ENCODE measurements at regions of chr2 and their contacts with region 1.

Region 1: DNA sequence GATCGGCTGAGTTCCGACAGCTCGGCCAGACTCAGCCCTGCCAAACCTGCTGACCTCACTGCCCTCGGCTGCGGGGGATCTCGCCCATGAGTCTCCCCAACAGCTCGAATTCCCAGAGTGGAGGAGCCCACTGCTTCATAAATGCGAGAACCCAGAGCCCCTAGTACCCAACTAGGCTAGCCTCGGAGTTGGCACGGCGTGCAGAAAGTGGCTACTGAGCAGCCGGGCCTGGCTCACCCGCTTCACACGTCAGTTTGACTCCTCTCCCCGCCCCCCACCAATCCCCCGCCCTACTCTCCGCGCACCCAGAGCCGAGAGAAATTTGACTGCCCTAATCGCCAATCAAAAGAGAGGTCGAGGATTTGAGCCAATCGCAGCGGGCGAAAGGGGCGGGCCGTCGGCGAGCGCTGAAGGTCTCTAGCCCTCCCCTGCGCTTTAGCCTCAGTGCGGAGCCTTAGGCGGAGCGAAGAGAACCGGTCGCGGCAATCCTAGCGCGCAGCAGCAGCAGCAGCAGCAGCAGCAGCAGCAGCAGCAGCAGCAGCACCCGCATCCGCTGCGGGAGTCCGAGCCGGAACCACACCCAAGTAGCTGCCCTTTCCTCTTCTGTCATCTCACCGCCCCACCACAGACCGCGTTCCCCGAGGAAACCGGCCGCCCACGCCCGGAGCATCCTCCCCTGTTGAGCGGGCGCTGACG is at the start of gene GLS:
- DNase-seq: peak; percentile 74 to 96 (median 86)
- ATAC-seq: peak; percentile 86
- H3K4me3 ChIP-seq: peak within 1 kb of the TSS; percentile 82
- H3K27ac ChIP-seq: peak within 1 kb of the TSS; percentile 90
- H3K4me1 ChIP-seq: peaks cover 2 to 18% of the 10 kb centered on the region in 2 experiments; a peak in 3 of 5 replicates
- H3K27me3 ChIP-seq: no peaks in the 10 kb centered on the region
- CTCF ChIP-seq: no peak
- EP300 ChIP-seq: no peak
- POLR2A ChIP-seq: peak; percentile 92
- RAD21 ChIP-seq: no peak
- polyA plus RNA-seq, gene GLS: 13.7 to 17.0 TPM

Region 2: GRCh38 chr2:190853531-190854383 is 26.8 kb before region 1 on chr2:
- CTCF ChIA-PET with region 1: no interaction called
- POLR2A ChIA-PET with region 1: interaction called, 4 read pairs
- in situ Hi-C with region 1: no loop called
- intact Hi-C with region 1: loop called (anchors 5 kb)
- DNase-seq: no peak
- ATAC-seq: no peak
- H3K4me3 ChIP-seq: no peak overlapping the region
- H3K27ac ChIP-seq: no peak overlapping the region
- H3K4me1 ChIP-seq: no peaks in the 10 kb centered on the region
- H3K27me3 ChIP-seq: no peaks in the 10 kb centered on the region
- CTCF ChIP-seq: no peak
- EP300 ChIP-seq: no peak
- POLR2A ChIP-seq: no peak
- RAD21 ChIP-seq: no peak

Region 3: DNA sequence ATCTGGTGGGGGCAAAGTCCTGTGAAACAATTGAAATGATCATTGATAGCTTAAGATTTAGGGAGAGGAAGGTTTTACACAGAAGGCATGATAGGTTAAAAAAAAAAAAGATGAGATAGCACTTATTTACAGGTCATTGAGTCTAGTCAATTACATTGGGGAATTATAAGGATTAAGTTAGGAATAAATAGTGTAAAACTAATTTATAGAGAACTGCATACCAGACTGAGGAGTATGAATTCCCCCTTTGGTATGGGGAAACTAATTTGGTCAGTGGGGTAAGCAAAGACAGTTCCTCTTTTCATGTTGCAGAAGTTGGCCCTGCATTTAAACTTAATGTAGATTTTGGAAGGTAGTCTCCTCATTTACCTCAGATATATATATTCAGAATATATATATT is 10.8 kb after region 1 on chr2:
- CTCF ChIA-PET with region 1: interaction called, 3 read pairs
- POLR2A ChIA-PET with region 1: interaction called, 45 read pairs
- in situ Hi-C with region 1: no loop called
- intact Hi-C with region 1: no loop called
- DNase-seq: no peak
- ATAC-seq: 0 out of 3 replicates have a peak, but pooled peaks have one; percentile 11
- H3K4me3 ChIP-seq: no peak overlapping the region
- H3K27ac ChIP-seq: no peak overlapping the region
- H3K4me1 ChIP-seq: peaks cover 0 to 6% of the 10 kb centered on the region in 2 experiments; a peak in 2 of 5 replicates
- H3K27me3 ChIP-seq: no peaks in the 10 kb centered on the region
- CTCF ChIP-seq: no peak
- EP300 ChIP-seq: no peak
- POLR2A ChIP-seq: no peak; the same call in 1 of the 2 replicates
- RAD21 ChIP-seq: no peak

Region 4: DNA sequence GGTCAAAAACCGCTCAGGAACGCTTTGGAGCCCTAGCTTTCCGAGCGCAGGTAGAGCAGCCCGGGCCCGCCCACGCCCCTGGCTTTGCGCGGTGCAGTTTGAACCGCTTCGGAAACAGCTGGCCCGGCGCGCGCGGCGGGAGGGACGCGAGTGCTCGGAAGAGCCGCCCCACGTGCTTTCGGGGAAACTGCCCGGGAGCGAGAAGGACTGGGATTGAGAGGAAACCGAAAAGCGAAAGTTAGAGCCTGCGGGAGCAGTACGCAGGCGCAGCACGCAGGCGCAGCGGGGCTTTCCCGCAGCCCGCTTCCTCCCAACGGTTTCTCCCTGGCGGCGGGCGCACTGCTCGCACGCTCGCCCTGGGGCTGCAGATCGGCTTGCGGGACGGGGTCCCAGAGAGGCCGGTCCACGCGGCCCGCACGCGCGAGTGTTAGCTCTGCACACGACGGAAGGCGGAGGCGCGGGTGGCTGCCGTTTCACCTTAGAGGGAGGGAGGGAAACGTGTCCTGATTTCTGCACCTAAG is 139.8 kb after region 1 on chr2:
- CTCF ChIA-PET with region 1: no interaction called
- POLR2A ChIA-PET with region 1: no interaction called
- in situ Hi-C with region 1: no loop called
- intact Hi-C with region 1: loop called (anchors 5 kb)
- DNase-seq: peak; percentile 87 to 95 (median 90)
- ATAC-seq: peak; percentile 92
- H3K4me3 ChIP-seq: peak overlapping the region; percentile 50
- H3K27ac ChIP-seq: peak overlapping the region; percentile 93
- H3K4me1 ChIP-seq: peaks cover 0 to 22% of the 10 kb centered on the region in 2 experiments; a peak in 4 of 5 replicates
- H3K27me3 ChIP-seq: no peaks in the 10 kb centered on the region
- CTCF ChIP-seq: 0 out of 6 replicates have a peak, but pooled peaks of 1 of the 3 experiments have one; percentile 1
- EP300 ChIP-seq: peak; percentile 95
- POLR2A ChIP-seq: peak; percentile 92
- RAD21 ChIP-seq: 0 out of 4 replicates have a peak, but pooled peaks of 1 of the 2 experiments have one; percentile 9